Caco-2 (cell line): ENCODE measurements at regions of chr2 and their contacts with region 1.

Region 1: GRCh38 chr2:231557571-231558237 is 27.5 kb upstream of the NMUR1 start:
- DNase-seq: peak; percentile 61 to 65
- H3K4me3 ChIP-seq: no peak overlapping the region
- H3K4me3 Mint-ChIP-seq: no peak overlapping the region
- H3K27ac Mint-ChIP-seq: no peak overlapping the region
- H3K4me1 ChIP-seq: no peaks in the 10 kb centered on the region
- H3K4me1 Mint-ChIP-seq: no peaks in the 10 kb centered on the region
- H3K27me3 ChIP-seq: no peaks in the 10 kb centered on the region
- H3K27me3 Mint-ChIP-seq: no peaks in the 10 kb centered on the region
- CTCF ChIP-seq: peak; percentile 39 to 61

Region 2: GRCh38 chr2:231280846-231281245 is 276.9 kb before region 1 on chr2:
- CTCF ChIA-PET with region 1: no interaction called
- POLR2A ChIA-PET with region 1: no interaction called
- intact Hi-C with region 1: no loop called
- DNase-seq: no peak
- H3K4me3 ChIP-seq: no peak overlapping the region
- H3K4me3 Mint-ChIP-seq: no peak overlapping the region
- H3K27ac Mint-ChIP-seq: no peak overlapping the region
- H3K4me1 ChIP-seq: no peaks in the 10 kb centered on the region
- H3K4me1 Mint-ChIP-seq: no peaks in the 10 kb centered on the region
- H3K27me3 ChIP-seq: no peaks in the 10 kb centered on the region
- H3K27me3 Mint-ChIP-seq: no peaks in the 10 kb centered on the region
- CTCF ChIP-seq: no peak

Region 3: DNA sequence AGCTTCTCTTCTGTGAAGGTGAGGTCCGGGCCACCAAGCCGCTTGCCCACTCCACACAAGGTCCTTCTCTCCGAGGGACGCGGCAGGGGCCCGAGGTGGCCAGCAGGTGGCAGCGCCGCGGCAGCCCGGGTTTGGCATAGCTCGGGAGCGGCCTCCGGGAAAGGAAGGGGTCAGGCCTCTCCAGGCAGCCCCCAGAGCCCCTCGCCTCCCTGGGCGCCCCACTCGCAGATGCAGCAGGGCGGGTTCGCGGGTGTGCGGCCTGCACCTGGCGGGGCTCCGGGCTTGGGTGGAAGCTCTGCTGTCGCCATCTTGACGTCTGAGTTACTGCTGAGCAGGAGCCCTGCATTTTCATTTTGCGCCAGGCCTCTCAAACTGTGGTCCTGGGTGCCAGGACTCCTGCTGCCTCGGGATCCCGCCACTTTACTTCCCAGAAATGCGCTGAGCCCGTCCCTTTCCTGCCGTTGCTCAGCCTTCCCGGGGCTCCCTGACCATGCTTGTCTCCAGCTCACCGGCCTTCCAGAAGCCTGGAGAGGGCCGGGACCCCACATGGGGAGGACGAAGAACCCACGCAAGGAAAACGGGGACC is 74.8 kb before region 1 on chr2:
- CTCF ChIA-PET with region 1: interaction called, 3 read pairs
- POLR2A ChIA-PET with region 1: no interaction called
- intact Hi-C with region 1: loop called (anchors 1 kb)
- DNase-seq: peak; percentile 43 to 61
- H3K4me3 ChIP-seq: no peak overlapping the region
- H3K4me3 Mint-ChIP-seq: no peak overlapping the region
- H3K27ac Mint-ChIP-seq: no peak overlapping the region
- H3K4me1 ChIP-seq: no peaks in the 10 kb centered on the region
- H3K4me1 Mint-ChIP-seq: no peaks in the 10 kb centered on the region
- H3K27me3 ChIP-seq: no peaks in the 10 kb centered on the region
- H3K27me3 Mint-ChIP-seq: no peaks in the 10 kb centered on the region
- CTCF ChIP-seq: peak; percentile 53 to 73